Pancreas (tissue), 10 donors: ENCODE measurements at regions of chr17 and their contacts with region 1.

Region 1: DNA sequence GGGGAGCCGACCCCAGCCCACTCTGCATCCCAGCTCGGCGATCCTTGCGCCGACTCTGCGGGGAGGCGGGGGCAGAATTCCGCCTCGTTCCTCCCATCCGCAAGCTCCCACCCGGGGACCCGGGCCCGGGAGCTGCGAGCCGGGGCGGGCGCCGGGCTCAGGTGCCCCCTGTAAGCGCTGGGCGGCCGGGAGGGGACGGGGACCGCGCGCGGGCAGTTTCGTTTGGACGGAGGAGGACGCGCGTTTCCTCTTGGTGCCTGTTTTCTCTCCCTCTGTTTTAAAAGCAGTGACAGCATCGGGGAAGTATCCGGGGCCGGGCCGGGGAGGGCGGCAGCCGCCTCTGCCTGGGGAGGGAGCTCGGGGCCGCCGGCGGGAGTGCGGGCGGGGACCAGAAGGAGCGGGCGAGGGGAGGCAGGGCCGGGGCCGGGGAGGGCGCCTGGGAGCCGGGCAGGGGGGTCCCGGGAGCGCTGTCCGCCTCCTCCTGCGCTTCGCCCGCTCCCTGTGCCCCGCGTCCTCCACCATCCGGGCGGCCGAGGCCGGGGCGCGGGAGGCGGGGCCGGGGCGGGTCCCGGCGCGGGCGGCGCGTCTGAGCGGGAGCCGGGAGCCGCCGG is 57.0 kb downstream of the RAP1GAP2 start:
- DNase-seq: peak; percentile 58 to 87 (median 70)
- ATAC-seq: peak; percentile 1 to 55 (median 18)
- H3K4me3 ChIP-seq: peak overlapping the region in 2 of 4 donors; percentile 56 to 63
- H3K27ac ChIP-seq: peak overlapping the region; percentile 54 to 81 (median 71)
- H3K4me1 ChIP-seq: peaks cover 0 to 12% (median 11%) of the 10 kb centered on the region in 3 donors
- H3K27me3 ChIP-seq: no peaks in the 10 kb centered on the region
- CTCF ChIP-seq: no peak

Region 2: GRCh38 chr17:2904152-2904551 is 50.9 kb after region 1 on chr17:
- intact Hi-C with region 1: loop called in 1 of 3 experiments (anchors 10 kb)
- DNase-seq: peak; percentile 78 to 95 (median 91)
- ATAC-seq: peak; percentile 67 to 78 (median 75)
- H3K4me3 ChIP-seq: no peak overlapping the region
- H3K27ac ChIP-seq: peak overlapping the region; percentile 77 to 90 (median 80)
- H3K4me1 ChIP-seq: peaks cover 43 to 58% (median 46%) of the 10 kb centered on the region in 3 donors
- H3K27me3 ChIP-seq: no peaks in the 10 kb centered on the region
- CTCF ChIP-seq: no peak

Region 3: DNA sequence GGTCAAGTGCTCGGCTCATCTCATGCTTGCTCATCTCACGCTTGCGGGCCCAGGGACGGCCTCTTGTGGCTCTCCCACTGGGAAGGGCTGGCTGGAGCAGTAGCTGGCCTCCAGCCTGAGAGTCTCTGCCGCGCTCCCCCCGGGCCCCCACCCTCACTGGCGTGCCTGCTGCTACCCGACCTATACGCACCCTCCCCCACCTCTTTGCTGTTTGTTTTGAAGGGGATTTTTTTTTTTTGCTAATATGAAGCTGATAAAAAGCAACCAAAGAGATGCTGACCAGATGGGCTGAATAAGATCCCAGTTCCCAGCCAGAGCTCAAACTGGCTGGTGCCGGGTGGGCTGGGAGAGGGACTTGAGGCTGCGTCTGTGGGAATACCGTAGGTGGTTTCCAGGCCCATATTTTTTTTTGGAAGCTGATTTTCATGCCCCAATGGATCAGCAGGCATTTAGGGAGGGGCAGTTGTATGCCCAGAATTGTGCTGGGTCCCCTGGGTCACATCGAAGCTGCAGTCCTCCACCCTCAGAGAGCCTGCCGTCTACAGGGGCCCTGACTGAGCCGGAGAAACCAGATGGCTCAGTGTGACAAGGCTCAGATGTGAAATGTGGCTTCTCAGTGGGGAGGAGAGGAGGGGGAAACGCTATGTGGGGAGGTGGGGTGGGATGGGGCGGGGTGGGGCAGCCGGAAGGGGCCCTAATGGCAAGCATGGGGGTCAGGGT is 58.0 kb after region 1 on chr17:
- intact Hi-C with region 1: loop called in 2 of 3 experiments (anchors 10 kb)
- DNase-seq: peak in 1 of 6 donors; percentile 58
- ATAC-seq: peak in 3 of 4 donors; percentile 39 to 54 (median 47)
- H3K4me3 ChIP-seq: no peak overlapping the region
- H3K27ac ChIP-seq: no peak overlapping the region
- H3K4me1 ChIP-seq: no peaks in the 10 kb centered on the region
- H3K27me3 ChIP-seq: no peaks in the 10 kb centered on the region
- CTCF ChIP-seq: no peak